ENCODE measurements at regions of chr22 and their contacts with region 1.

Region 1: DNA sequence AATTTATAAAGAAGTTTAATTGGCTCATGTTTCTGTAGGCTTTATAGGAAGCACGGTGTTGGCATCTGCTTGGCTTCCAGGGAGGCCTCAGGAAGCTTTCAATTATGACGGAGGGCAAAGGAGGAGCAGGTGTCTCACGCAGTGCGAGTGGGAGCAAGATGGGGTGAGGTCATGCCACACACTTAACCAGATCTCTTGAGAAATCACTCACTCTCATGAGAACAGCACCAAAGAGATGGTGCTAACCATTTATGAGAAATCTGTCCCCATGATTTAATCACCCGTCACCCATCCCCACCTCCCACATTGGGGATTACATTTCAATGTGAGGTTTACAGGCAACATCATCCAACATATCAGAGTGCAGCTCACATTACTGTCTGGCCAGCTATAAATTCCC is 103.5 kb downstream of the ARHGAP8 start:
- DNase-seq: no peak
- ATAC-seq: no peak
- H3K4me3 ChIP-seq: no peak overlapping the region
- H3K27ac ChIP-seq: no peak overlapping the region
- H3K4me1 ChIP-seq: no peaks in the 10 kb centered on the region
- H3K27me3 ChIP-seq: no peaks in the 10 kb centered on the region
- CTCF ChIP-seq: no peak

Region 2: GRCh38 chr22:44901301-44901700 is 45.4 kb after region 1 on chr22:
- CTCF ChIA-PET with region 1: interaction called, 14 read pairs
- POLR2A ChIA-PET with region 1: no interaction called
- in situ Hi-C with region 1: no loop called
- intact Hi-C with region 1: no loop called
- DNase-seq: no peak
- ATAC-seq: no peak
- H3K4me3 ChIP-seq: no peak overlapping the region
- H3K27ac ChIP-seq: no peak overlapping the region
- H3K4me1 ChIP-seq: no peaks in the 10 kb centered on the region
- H3K27me3 ChIP-seq: no peaks in the 10 kb centered on the region
- CTCF ChIP-seq: no peak

Region 3: DNA sequence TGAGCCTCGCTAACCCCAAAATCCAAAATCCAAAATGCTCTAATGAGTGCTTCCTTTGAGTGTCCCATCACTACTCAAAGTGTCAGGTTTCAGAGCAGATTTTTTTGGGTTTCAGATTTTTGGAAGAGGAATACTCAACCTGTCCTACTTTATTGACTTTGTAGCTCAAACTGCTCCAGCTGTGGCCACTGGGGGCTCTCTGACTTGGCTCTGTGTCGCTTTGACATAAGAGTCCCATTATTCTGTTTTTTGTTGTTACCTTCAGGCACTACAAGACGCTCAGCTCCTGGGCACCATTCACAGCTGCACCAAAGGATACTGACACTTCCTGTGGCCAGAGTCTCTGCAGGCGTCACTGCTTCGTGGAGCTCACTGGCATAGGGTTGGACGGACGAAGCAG is 112.9 kb after region 1 on chr22:
- CTCF ChIA-PET with region 1: no interaction called
- POLR2A ChIA-PET with region 1: interaction called, 11 read pairs
- in situ Hi-C with region 1: no loop called
- intact Hi-C with region 1: no loop called
- DNase-seq: no peak
- ATAC-seq: no peak
- H3K4me3 ChIP-seq: no peak overlapping the region
- H3K27ac ChIP-seq: no peak overlapping the region
- H3K4me1 ChIP-seq: no peaks in the 10 kb centered on the region
- H3K27me3 ChIP-seq: no peaks in the 10 kb centered on the region
- CTCF ChIP-seq: no peak

Measured in Panc1 (cell line).